CD4-positive, alpha-beta T cell (primary cell): ENCODE measurements at regions of chr19 and their contacts with region 1.

Region 1: GRCh38 chr19:3984908-3985642 is at the start of gene EEF2:
- DNase-seq: peak; percentile 89 to 97 (median 92)
- ATAC-seq: peak; percentile 58
- H3K4me3 ChIP-seq: peak within 1 kb of the TSS; percentile 88
- H3K4me3 Mint-ChIP-seq: peak within 1 kb of the TSS; percentile 97
- H3K27ac ChIP-seq: peak within 1 kb of the TSS; percentile 90 to 92
- H3K27ac Mint-ChIP-seq: peak within 1 kb of the TSS; percentile 91
- H3K4me1 ChIP-seq: peaks cover 70% of the 10 kb centered on the region
- H3K4me1 Mint-ChIP-seq: peaks cover 52% of the 10 kb centered on the region
- H3K27me3 ChIP-seq: no peaks in the 10 kb centered on the region
- H3K27me3 Mint-ChIP-seq: no peaks in the 10 kb centered on the region
- CTCF ChIP-seq: no peak
- total RNA-seq, gene EEF2: 2,756 to 2,866 TPM

Region 2: DNA sequence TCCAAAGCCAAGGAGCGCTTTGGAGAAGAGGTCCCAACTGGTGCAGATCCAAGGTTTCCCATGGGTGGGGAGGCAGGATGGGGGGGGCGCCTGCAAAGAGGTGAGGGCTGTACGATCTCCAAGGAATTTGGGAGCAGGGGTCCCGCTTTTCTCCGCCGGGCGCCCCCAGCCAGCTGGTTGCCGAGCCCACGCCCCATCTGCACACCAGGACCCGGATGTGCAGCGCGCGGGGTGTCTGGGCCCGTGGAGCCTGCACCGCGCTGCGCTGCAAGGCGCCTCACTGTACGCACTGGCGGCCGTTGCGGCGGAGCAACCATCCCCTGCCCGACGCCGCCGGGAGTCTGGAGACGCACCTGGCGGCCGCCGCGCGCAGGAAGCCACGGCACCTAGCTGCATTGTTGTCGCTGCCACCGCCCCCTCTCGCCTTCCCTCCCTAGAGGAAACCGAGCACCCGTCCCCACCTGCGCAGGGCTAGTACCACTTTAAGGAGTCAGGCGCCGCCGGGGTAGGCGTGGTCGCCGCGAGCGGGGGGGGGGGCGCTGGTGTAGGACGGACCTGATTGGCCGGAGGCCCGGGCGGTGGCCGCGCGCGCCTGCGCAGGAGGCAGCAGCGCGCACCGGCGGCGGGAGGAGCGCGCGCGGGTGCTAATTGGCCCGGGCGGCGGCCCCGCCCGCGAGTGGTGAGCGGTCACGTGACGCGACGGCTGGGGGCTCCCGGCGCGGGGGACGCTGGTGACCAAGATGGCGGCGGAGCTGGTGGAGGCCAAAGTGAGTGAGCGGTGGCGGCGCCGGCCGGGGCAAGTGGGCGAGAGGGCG is 22.2 kb after region 1 on chr19 and contains the start of gene PIAS4:
- CTCF ChIA-PET with region 1: interaction called, 32 read pairs
- POLR2A ChIA-PET with region 1: interaction called, 39 read pairs
- intact Hi-C with region 1: loop called (anchors 1 kb)
- DNase-seq: peak; percentile 93 to 99 (median 96)
- ATAC-seq: peak; percentile 87
- H3K4me3 ChIP-seq: peak within 1 kb of the TSS; percentile 85
- H3K4me3 Mint-ChIP-seq: peak within 1 kb of the TSS; percentile 89
- H3K27ac ChIP-seq: peak within 1 kb of the TSS in 1 of 2 donors; percentile 60
- H3K27ac Mint-ChIP-seq: peak within 1 kb of the TSS; percentile 80
- H3K4me1 ChIP-seq: peaks cover 48% of the 10 kb centered on the region
- H3K4me1 Mint-ChIP-seq: peaks cover 15% of the 10 kb centered on the region
- H3K27me3 ChIP-seq: no peaks in the 10 kb centered on the region
- H3K27me3 Mint-ChIP-seq: no peaks in the 10 kb centered on the region
- CTCF ChIP-seq: peak; percentile 24
- total RNA-seq, gene PIAS4: 14.5 to 16.5 TPM

Region 3: DNA sequence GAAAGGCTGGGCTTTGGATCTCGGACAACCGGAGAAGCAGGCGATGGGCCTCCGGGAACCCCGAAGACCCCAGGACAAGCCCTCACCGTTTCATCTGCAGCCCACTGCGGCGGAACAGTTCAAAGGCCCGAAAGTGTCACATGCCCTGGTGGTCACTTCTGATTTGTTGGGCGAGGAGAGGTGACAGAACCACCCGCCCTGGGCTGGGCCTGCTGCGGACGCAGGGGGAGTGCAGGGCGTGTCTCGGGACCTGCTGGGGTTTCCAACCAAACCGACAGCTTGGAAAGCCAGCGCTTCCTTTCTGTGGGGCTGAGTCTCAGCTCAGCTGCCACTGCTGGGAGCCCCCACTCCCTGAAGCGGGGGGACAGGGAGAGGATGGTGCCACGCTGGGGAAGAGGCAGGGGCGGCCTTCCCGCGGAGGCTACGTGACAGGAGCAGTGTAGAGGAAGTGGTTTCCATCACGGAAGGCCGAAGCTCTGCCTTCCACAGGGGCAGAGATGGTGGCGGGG is 104.4 kb after region 1 on chr19:
- CTCF ChIA-PET with region 1: interaction called, 4 read pairs
- POLR2A ChIA-PET with region 1: interaction called, 11 read pairs
- intact Hi-C with region 1: no loop called
- DNase-seq: peak in 9 of 14 experiments; percentile 25 to 81 (median 48)
- ATAC-seq: peak; percentile 47
- H3K4me3 ChIP-seq: peak overlapping the region; percentile 34
- H3K4me3 Mint-ChIP-seq: peak overlapping the region; percentile 80
- H3K27ac ChIP-seq: peak overlapping the region; percentile 52 to 77
- H3K27ac Mint-ChIP-seq: peak overlapping the region; percentile 95
- H3K4me1 ChIP-seq: peaks cover 57% of the 10 kb centered on the region
- H3K4me1 Mint-ChIP-seq: peaks cover 40% of the 10 kb centered on the region
- H3K27me3 ChIP-seq: no peaks in the 10 kb centered on the region
- H3K27me3 Mint-ChIP-seq: no peaks in the 10 kb centered on the region
- CTCF ChIP-seq: no peak

Region 4: GRCh38 chr19:4123615-4124568 is 138.8 kb after region 1 on chr19 and contains the start of gene MAP2K2:
- CTCF ChIA-PET with region 1: interaction called, 3 read pairs
- POLR2A ChIA-PET with region 1: no interaction called
- intact Hi-C with region 1: loop called in 1 of 2 experiments (anchors 5 kb)
- DNase-seq: peak; percentile 92 to 99 (median 96)
- ATAC-seq: peak; percentile 97
- H3K4me3 ChIP-seq: peak within 1 kb of the TSS; percentile 59
- H3K4me3 Mint-ChIP-seq: peak within 1 kb of the TSS; percentile 93
- H3K27ac ChIP-seq: peak within 1 kb of the TSS; percentile 44 to 53
- H3K27ac Mint-ChIP-seq: peak within 1 kb of the TSS; percentile 89
- H3K4me1 ChIP-seq: peaks cover 32% of the 10 kb centered on the region
- H3K4me1 Mint-ChIP-seq: peaks cover 26% of the 10 kb centered on the region
- H3K27me3 ChIP-seq: no peaks in the 10 kb centered on the region
- H3K27me3 Mint-ChIP-seq: no peaks in the 10 kb centered on the region
- CTCF ChIP-seq: no peak
- total RNA-seq, gene MAP2K2: 72.7 to 77.6 TPM

Region 5: GRCh38 chr19:4182084-4182810 is 197.2 kb after region 1 on chr19 and contains the starts of genes ANKRD24 and SIRT6:
- CTCF ChIA-PET with region 1: no interaction called
- POLR2A ChIA-PET with region 1: interaction called, 3 read pairs
- intact Hi-C with region 1: loop called (anchors 1 to 2 kb)
- DNase-seq: peak; percentile 90 to 98 (median 96)
- ATAC-seq: peak; percentile 80
- H3K4me3 ChIP-seq: peak within 1 kb of the TSS; percentile 96
- H3K4me3 Mint-ChIP-seq: peak within 1 kb of the TSS; percentile 99
- H3K27ac ChIP-seq: peak within 1 kb of the TSS; percentile 66 to 80
- H3K27ac Mint-ChIP-seq: peak within 1 kb of the TSS; percentile 96
- H3K4me1 ChIP-seq: peaks cover 47% of the 10 kb centered on the region
- H3K4me1 Mint-ChIP-seq: peaks cover 32% of the 10 kb centered on the region
- H3K27me3 ChIP-seq: no peaks in the 10 kb centered on the region
- H3K27me3 Mint-ChIP-seq: peaks cover 3% of the 10 kb centered on the region
- CTCF ChIP-seq: no peak
- total RNA-seq, gene ANKRD24: 0.59 to 0.60 TPM
- total RNA-seq, gene SIRT6: 11.2 to 14.2 TPM

Region 6: GRCh38 chr19:4208385-4209094 is 223.5 kb after region 1 on chr19:
- CTCF ChIA-PET with region 1: interaction called, 3 read pairs
- POLR2A ChIA-PET with region 1: no interaction called
- intact Hi-C with region 1: loop called (anchors 1 kb)
- DNase-seq: no peak
- ATAC-seq: no peak
- H3K4me3 ChIP-seq: no peak overlapping the region
- H3K4me3 Mint-ChIP-seq: no peak overlapping the region
- H3K27ac ChIP-seq: no peak overlapping the region
- H3K27ac Mint-ChIP-seq: no peak overlapping the region
- H3K4me1 ChIP-seq: peaks cover 3% of the 10 kb centered on the region
- H3K4me1 Mint-ChIP-seq: no peaks in the 10 kb centered on the region
- H3K27me3 ChIP-seq: peaks cover 0 to 5% of the 10 kb centered on the region in 2 experiments
- H3K27me3 Mint-ChIP-seq: peaks cover 9% of the 10 kb centered on the region
- CTCF ChIP-seq: peak; percentile 19